H1 (cell line): ENCODE measurements at regions of chr7 and their contacts with region 1.

Region 1: DNA sequence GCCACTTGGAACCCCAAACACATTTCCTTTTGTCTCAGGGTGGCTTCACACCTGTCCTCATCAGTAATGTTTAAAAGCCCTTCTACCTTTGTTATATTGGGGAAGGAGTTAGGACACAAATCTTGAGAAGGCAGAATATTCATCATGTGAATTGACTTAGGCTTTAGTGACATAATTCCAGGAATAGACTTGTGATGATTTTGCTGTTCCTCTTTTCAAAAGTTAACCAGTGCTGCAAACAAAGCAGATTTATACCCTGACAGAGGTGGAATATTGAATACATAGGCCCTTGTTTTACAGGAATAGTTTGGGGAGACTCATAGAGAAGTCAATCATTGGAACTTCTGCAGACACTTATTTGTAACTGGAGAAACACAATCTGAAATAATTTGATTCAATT is 27.0 kb downstream of the ZNF786 start:
- DNase-seq: no peak
- H3K4me3 ChIP-seq: no peak overlapping the region
- H3K27ac ChIP-seq: no peak overlapping the region
- H3K4me1 ChIP-seq: no peaks in the 10 kb centered on the region; a peak in 1 of 7 replicates
- H3K27me3 ChIP-seq: no peaks in the 10 kb centered on the region
- CTCF ChIP-seq: no peak
- EP300 ChIP-seq: no peak
- POLR2A ChIP-seq: no peak
- RAD21 ChIP-seq: no peak

Region 2: GRCh38 chr7:148882192-148882591 is 181.3 kb before region 1 on chr7:
- CTCF ChIA-PET with region 1: no interaction called
- POLR2A ChIA-PET with region 1: no interaction called
- DNase-seq: no peak
- H3K4me3 ChIP-seq: peak overlapping the region in 2 of 4 experiments; percentile 71 to 79; a peak in 2 of 8 replicates
- H3K27ac ChIP-seq: no peak overlapping the region
- H3K4me1 ChIP-seq: peaks cover 0 to 2% (median 0%) of the 10 kb centered on the region in 4 experiments; a peak in 3 of 7 replicates
- H3K27me3 ChIP-seq: no peaks in the 10 kb centered on the region
- CTCF ChIP-seq: no peak
- EP300 ChIP-seq: no peak
- POLR2A ChIP-seq: no peak
- RAD21 ChIP-seq: no peak

Region 3: GRCh38 chr7:149028346-149029109 is 34.9 kb before region 1 on chr7 and contains the start of gene PDIA4:
- CTCF ChIA-PET with region 1: interaction called, 7 read pairs
- POLR2A ChIA-PET with region 1: interaction called, 13 read pairs
- DNase-seq: peak; percentile 98 to 99
- H3K4me3 ChIP-seq: peak within 1 kb of the TSS; percentile 57 to 91 (median 76)
- H3K27ac ChIP-seq: peak within 1 kb of the TSS; percentile 86
- H3K4me1 ChIP-seq: peaks cover under 1 to 9% (median 3%) of the 10 kb centered on the region in 4 experiments
- H3K27me3 ChIP-seq: peaks cover 0 to 2% (median 0%) of the 10 kb centered on the region in 4 experiments; a peak in 1 of 7 replicates
- CTCF ChIP-seq: peak in 1 of 3 experiments; percentile 9; a peak in 1 of 4 replicates
- EP300 ChIP-seq: peak in 1 of 2 experiments; percentile 8; a peak in 1 of 3 replicates
- POLR2A ChIP-seq: peak; percentile 94 to 96
- RAD21 ChIP-seq: no peak; a peak in 1 of 4 replicates
- total RNA-seq, gene PDIA4: 303 and 308 TPM in 2 replicates

Region 4: GRCh38 chr7:149161241-149161848 is 97.9 kb after region 1 on chr7:
- CTCF ChIA-PET with region 1: no interaction called
- POLR2A ChIA-PET with region 1: no interaction called
- DNase-seq: no peak
- H3K4me3 ChIP-seq: no peak overlapping the region
- H3K27ac ChIP-seq: no peak overlapping the region
- H3K4me1 ChIP-seq: no peaks in the 10 kb centered on the region
- H3K27me3 ChIP-seq: no peaks in the 10 kb centered on the region
- CTCF ChIP-seq: no peak
- EP300 ChIP-seq: no peak
- POLR2A ChIP-seq: no peak
- RAD21 ChIP-seq: no peak